Right lobe of liver (tissue), 6 donors: ENCODE measurements at regions of chr1 and their contacts with region 1.

Region 1: DNA sequence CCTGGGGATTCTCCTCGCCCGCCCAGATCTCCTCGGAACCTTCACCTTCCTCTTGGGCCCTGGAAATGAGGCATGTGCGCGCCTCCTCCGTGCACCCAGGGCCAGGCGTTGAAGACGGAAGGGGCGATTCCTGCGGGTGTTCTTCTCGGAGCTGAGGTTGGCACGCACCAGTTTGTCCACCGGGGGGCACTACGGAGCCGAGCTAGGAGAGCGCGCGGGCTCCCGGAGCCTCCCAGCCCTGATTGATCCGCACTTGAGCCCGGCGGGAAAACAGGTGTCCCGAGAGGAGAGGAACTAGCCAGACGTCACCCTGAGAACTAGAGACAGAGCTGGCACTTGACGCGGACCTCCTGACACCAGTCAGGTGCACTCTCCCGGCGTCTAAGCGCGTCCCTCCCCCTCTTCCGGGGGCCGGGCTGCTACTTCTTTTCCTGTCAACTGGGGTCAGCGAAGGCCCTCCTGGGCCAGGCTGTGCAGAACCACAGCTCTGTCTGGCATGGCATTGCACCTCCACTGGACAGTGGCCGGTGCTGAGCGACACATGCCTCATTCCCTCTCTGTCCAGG is 18.3 kb upstream of the SERINC2 start:
- DNase-seq: peak; percentile 86 to 89 (median 87)
- ATAC-seq: peak; percentile 98 to 99 (median 99)
- H3K4me3 ChIP-seq: peak overlapping the region; percentile 28 to 42 (median 29)
- H3K27ac ChIP-seq: no peak overlapping the region
- H3K4me1 ChIP-seq: peaks cover 0 to 3% (median under 1%) of the 10 kb centered on the region in 4 donors
- H3K27me3 ChIP-seq: no peaks in the 10 kb centered on the region
- CTCF ChIP-seq: peak; percentile 83 to 93 (median 88)
- POLR2A ChIP-seq: no peak

Region 2: GRCh38 chr1:31548907-31549808 is 154.4 kb after region 1 on chr1:
- intact Hi-C with region 1: loop called (anchors 10 kb)
- DNase-seq: peak; percentile 78 to 86 (median 78)
- ATAC-seq: peak; percentile 91 to 98 (median 96)
- H3K4me3 ChIP-seq: peak overlapping the region in 1 of 3 donors; percentile 32
- H3K27ac ChIP-seq: peak overlapping the region; percentile 29 to 65 (median 43)
- H3K4me1 ChIP-seq: peaks cover 0 to 16% (median 8%) of the 10 kb centered on the region in 4 donors
- H3K27me3 ChIP-seq: no peaks in the 10 kb centered on the region
- CTCF ChIP-seq: peak; percentile 96 to 99 (median 97)
- POLR2A ChIP-seq: no peak